ENCODE measurements at regions of chr20 and their contacts with region 1.

Region 1: GRCh38 chr20:9660236-9660868 is 146.0 kb downstream of the LAMP5 start:
- DNase-seq: no peak
- ATAC-seq: no peak
- H3K4me3 ChIP-seq: no peak overlapping the region
- H3K27ac ChIP-seq: no peak overlapping the region
- H3K4me1 ChIP-seq: no peaks in the 10 kb centered on the region
- H3K27me3 ChIP-seq: no peaks in the 10 kb centered on the region
- CTCF ChIP-seq: no peak
- EP300 ChIP-seq: no peak
- POLR2A ChIP-seq: no peak
- RAD21 ChIP-seq: no peak

Region 2: DNA sequence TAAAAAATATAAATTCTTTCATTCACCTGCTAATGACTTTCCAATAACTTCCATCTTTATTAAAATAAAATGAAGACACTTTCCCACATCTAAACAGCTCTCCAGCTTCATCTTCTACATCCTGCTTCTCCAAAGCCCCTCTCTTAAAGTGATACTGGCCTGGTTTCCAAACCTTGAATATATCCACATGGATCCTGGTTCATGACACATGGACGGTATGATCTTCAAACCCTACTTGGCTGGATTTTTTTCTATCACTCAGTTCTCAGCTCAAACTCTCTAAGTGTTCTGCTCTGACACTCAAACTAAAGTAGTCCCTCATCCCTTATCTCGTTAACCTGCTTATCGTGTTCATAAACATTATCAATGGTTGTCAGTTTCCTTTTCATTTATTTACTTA is 50.3 kb after region 1 on chr20:
- CTCF ChIA-PET with region 1: no interaction called
- POLR2A ChIA-PET with region 1: interaction called, 4 read pairs
- RAD21 ChIA-PET with region 1: no interaction called
- SMC1A ChIA-PET with region 1: no interaction called
- in situ Hi-C with region 1: no loop called
- intact Hi-C with region 1: loop called (anchors 10 kb)
- DNase-seq: no peak
- ATAC-seq: no peak
- H3K4me3 ChIP-seq: no peak overlapping the region
- H3K27ac ChIP-seq: no peak overlapping the region
- H3K4me1 ChIP-seq: no peaks in the 10 kb centered on the region
- H3K27me3 ChIP-seq: no peaks in the 10 kb centered on the region
- CTCF ChIP-seq: no peak
- EP300 ChIP-seq: no peak
- POLR2A ChIP-seq: no peak
- RAD21 ChIP-seq: no peak